ENCODE measurements at regions of chr5 and their contacts with region 1.

Region 1: GRCh38 chr5:157718519-157718918 is 12.7 kb upstream of the THG1L start:
- DNase-seq: peak in 3 of 9 experiments; percentile 17 to 59 (median 57)
- ATAC-seq: peak; percentile 77
- H3K4me3 ChIP-seq: no peak overlapping the region
- H3K4me3 Mint-ChIP-seq: no peak overlapping the region
- H3K27ac ChIP-seq: no peak overlapping the region
- H3K27ac Mint-ChIP-seq: no peak overlapping the region
- H3K4me1 ChIP-seq: no peaks in the 10 kb centered on the region
- H3K4me1 Mint-ChIP-seq: peaks cover 12% of the 10 kb centered on the region
- H3K27me3 ChIP-seq: no peaks in the 10 kb centered on the region
- H3K27me3 Mint-ChIP-seq: no peaks in the 10 kb centered on the region
- CTCF ChIP-seq: peak; percentile 36

Region 2: GRCh38 chr5:157342822-157343402 is 375.6 kb before region 1 on chr5:
- CTCF ChIA-PET with region 1: interaction called, 6 read pairs
- POLR2A ChIA-PET with region 1: no interaction called
- intact Hi-C with region 1: loop called in 1 of 2 experiments (anchors 2 kb)
- DNase-seq: peak in 4 of 9 experiments; percentile 32 to 41 (median 35)
- ATAC-seq: peak; percentile 35
- H3K4me3 ChIP-seq: no peak overlapping the region
- H3K4me3 Mint-ChIP-seq: no peak overlapping the region
- H3K27ac ChIP-seq: no peak overlapping the region
- H3K27ac Mint-ChIP-seq: peak overlapping the region; percentile 81
- H3K4me1 ChIP-seq: no peaks in the 10 kb centered on the region
- H3K4me1 Mint-ChIP-seq: peaks cover 24% of the 10 kb centered on the region
- H3K27me3 ChIP-seq: no peaks in the 10 kb centered on the region
- H3K27me3 Mint-ChIP-seq: no peaks in the 10 kb centered on the region
- CTCF ChIP-seq: peak; percentile 49

Region 3: GRCh38 chr5:157431544-157432200 is 286.8 kb before region 1 on chr5:
- CTCF ChIA-PET with region 1: interaction called, 28 read pairs
- POLR2A ChIA-PET with region 1: no interaction called
- intact Hi-C with region 1: loop called (anchors 1 to 2 kb)
- DNase-seq: peak in 2 of 9 experiments; percentile 60 to 66
- ATAC-seq: peak; percentile 55
- H3K4me3 ChIP-seq: no peak overlapping the region
- H3K4me3 Mint-ChIP-seq: no peak overlapping the region
- H3K27ac ChIP-seq: no peak overlapping the region
- H3K27ac Mint-ChIP-seq: no peak overlapping the region
- H3K4me1 ChIP-seq: no peaks in the 10 kb centered on the region
- H3K4me1 Mint-ChIP-seq: peaks cover 2% of the 10 kb centered on the region
- H3K27me3 ChIP-seq: no peaks in the 10 kb centered on the region
- H3K27me3 Mint-ChIP-seq: peaks cover 13% of the 10 kb centered on the region
- CTCF ChIP-seq: peak; percentile 44

Measured in CD8-positive, alpha-beta T cell (primary cell).